ENCODE measurements at regions of chr1 and their contacts with region 1.

Region 1: GRCh38 chr1:39973503-39974135 is 18.7 kb downstream of the MFSD2A start:
- DNase-seq: peak; percentile 80
- H3K4me3 Mint-ChIP-seq: no peak overlapping the region
- H3K27ac Mint-ChIP-seq: no peak overlapping the region
- H3K4me1 Mint-ChIP-seq: peaks cover 5% of the 10 kb centered on the region
- H3K27me3 Mint-ChIP-seq: no peaks in the 10 kb centered on the region

Region 2: GRCh38 chr1:39816415-39817090 is 157.1 kb before region 1 on chr1:
- CTCF ChIA-PET with region 1: interaction called, 11 read pairs
- POLR2A ChIA-PET with region 1: no interaction called
- DNase-seq: peak; percentile 66
- H3K4me3 Mint-ChIP-seq: peak overlapping the region; percentile 30
- H3K27ac Mint-ChIP-seq: peak overlapping the region; percentile 81
- H3K4me1 Mint-ChIP-seq: peaks cover 9% of the 10 kb centered on the region
- H3K27me3 Mint-ChIP-seq: no peaks in the 10 kb centered on the region

Region 3: GRCh38 chr1:39919545-39919944 is 54.1 kb before region 1 on chr1:
- CTCF ChIA-PET with region 1: interaction called, 18 read pairs
- POLR2A ChIA-PET with region 1: no interaction called
- DNase-seq: peak; percentile 53
- H3K4me3 Mint-ChIP-seq: no peak overlapping the region
- H3K27ac Mint-ChIP-seq: no peak overlapping the region
- H3K4me1 Mint-ChIP-seq: no peaks in the 10 kb centered on the region
- H3K27me3 Mint-ChIP-seq: peaks cover 6% of the 10 kb centered on the region

Region 4: DNA sequence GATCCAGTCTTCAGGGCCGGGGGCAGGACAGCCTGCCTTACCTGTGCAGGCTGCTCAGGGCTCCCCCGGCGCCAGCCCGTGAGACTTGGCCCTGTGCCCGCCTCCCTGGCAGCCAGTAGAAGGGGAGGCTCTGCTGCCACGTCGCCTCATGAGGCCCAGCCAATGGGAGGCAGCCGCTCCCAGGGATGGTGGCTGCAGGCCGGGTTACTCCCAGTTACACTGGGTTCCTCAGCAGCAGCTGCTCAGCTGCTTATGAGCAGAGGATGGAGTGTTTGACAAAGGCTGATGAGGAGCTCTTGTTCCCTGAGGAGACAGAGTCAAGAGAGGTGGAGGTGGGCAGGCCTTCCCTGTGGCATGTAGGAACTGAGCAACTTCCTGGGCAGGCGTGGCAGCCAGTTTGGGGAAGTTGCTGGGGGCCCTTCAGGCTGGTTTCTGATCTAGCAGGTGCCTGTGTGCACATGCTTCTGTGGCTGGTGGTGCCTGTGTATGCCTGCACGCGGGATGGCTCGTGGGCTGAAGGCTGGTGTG is 13.1 kb before region 1 on chr1:
- CTCF ChIA-PET with region 1: interaction called, 12 read pairs
- POLR2A ChIA-PET with region 1: no interaction called
- DNase-seq: peak; percentile 45
- H3K4me3 Mint-ChIP-seq: peak overlapping the region; percentile 48
- H3K27ac Mint-ChIP-seq: peak overlapping the region; percentile 91
- H3K4me1 Mint-ChIP-seq: peaks cover 26% of the 10 kb centered on the region
- H3K27me3 Mint-ChIP-seq: no peaks in the 10 kb centered on the region

Measured in activated CD4-positive, alpha-beta T cell treated with anti-CD3 and anti-CD28 coated beads, Interleukin-2, amount 10 ng/mL, durations not matched to agents 7 days and 5 days (primary cell).